Mammary epithelial cell (primary cell): ENCODE measurements at regions of chr2 and their contacts with region 1.

Region 1: DNA sequence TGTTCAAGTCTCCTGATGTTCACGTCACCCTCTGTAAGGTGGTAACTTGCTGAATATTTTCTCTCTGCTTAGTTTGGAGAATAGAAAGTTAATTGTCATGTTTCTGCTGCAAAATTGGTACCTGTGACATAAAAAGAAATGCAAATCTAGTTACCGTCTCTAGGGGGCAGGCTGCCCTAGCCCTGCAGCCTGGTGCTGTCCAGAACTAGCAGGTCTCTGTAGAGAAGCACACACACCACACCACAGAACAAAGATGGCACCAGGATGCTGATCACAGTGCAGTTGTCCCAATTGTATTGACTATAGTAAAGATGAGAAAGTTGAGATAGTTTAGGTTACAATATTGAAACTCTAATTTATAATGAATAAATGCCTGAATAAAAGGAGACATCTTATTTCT is 47.0 kb downstream of the SLC9A4 start:
- DNase-seq: peak; percentile 27
- H3K4me3 ChIP-seq: no peak overlapping the region
- H3K27ac ChIP-seq: no peak overlapping the region
- H3K4me1 ChIP-seq: no peaks in the 10 kb centered on the region
- H3K27me3 ChIP-seq: no peaks in the 10 kb centered on the region
- CTCF ChIP-seq: peak; percentile 79 to 91

Region 2: DNA sequence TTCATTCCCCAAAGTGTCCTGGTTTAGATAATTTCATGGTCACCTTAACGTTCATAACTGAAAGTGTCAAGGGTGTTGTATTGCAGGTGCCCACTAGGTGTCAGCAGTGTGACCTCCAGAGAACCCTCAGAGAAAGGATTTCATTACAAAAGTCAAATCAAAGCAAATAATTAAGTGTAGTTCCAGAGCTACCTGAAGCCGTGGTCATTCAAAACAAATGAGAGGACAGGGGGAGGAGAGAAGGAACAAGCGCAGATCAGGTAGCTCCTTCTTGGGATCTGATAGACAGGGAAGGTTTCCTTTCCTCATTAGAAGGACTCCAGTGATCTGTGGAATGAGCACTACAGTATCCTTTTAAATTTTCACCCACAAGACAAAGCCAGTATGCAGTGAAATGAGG is 47.0 kb before region 1 on chr2 and contains the start of gene SLC9A4:
- CTCF ChIA-PET with region 1: no interaction called
- dilution Hi-C with region 1: no loop called
- in situ Hi-C with region 1: no loop called
- intact Hi-C with region 1: loop called (anchors 2 kb)
- DNase-seq: peak; percentile 39
- H3K4me3 ChIP-seq: no peak within 1 kb of the TSS
- H3K27ac ChIP-seq: no peak within 1 kb of the TSS
- H3K4me1 ChIP-seq: no peaks in the 10 kb centered on the region
- H3K27me3 ChIP-seq: peaks cover 2% of the 10 kb centered on the region
- CTCF ChIP-seq: peak; percentile 90 to 91
- total RNA-seq, gene SLC9A4: 0.07 TPM in 1 of 2 donors, not detected in the other

Region 3: GRCh38 chr2:102551329-102552096 is 31.5 kb after region 1 on chr2:
- CTCF ChIA-PET with region 1: no interaction called
- dilution Hi-C with region 1: no loop called
- in situ Hi-C with region 1: no loop called
- intact Hi-C with region 1: no loop called
- DNase-seq: no peak
- H3K4me3 ChIP-seq: no peak overlapping the region
- H3K27ac ChIP-seq: no peak overlapping the region
- H3K4me1 ChIP-seq: no peaks in the 10 kb centered on the region
- H3K27me3 ChIP-seq: peaks cover 2% of the 10 kb centered on the region
- CTCF ChIP-seq: no peak

Region 4: DNA sequence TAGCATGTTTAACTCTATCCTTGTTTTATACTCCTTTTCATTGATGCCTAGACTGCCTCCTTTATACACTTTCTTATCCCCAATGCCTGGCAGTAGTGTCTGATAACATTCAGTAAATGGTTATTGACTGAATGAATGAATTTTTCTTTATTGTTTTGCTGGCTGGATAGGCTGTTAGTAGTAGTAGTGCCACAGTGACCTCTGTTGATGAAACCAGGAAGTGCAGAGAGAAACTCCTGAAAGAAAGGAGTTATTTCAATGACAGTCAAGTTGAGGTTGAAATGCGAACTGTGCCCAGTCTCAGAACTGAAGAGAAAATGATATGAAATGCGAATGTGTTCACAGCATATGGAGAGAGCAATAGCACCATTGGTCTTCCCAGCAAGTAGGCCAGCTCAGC is 72.6 kb after region 1 on chr2:
- CTCF ChIA-PET with region 1: no interaction called
- dilution Hi-C with region 1: no loop called
- in situ Hi-C with region 1: no loop called
- intact Hi-C with region 1: loop called (anchors 2 kb)
- DNase-seq: no peak
- H3K4me3 ChIP-seq: no peak overlapping the region
- H3K27ac ChIP-seq: no peak overlapping the region
- H3K4me1 ChIP-seq: no peaks in the 10 kb centered on the region
- H3K27me3 ChIP-seq: no peaks in the 10 kb centered on the region
- CTCF ChIP-seq: peak; percentile 65 to 72

Region 5: GRCh38 chr2:102606363-102606762 is 86.3 kb after region 1 on chr2:
- CTCF ChIA-PET with region 1: no interaction called
- dilution Hi-C with region 1: no loop called
- in situ Hi-C with region 1: loop called in 1 of 2 experiments (anchors 10 kb)
- intact Hi-C with region 1: no loop called
- DNase-seq: peak; percentile 96
- H3K4me3 ChIP-seq: no peak overlapping the region
- H3K27ac ChIP-seq: no peak overlapping the region
- H3K4me1 ChIP-seq: peaks cover 5% of the 10 kb centered on the region
- H3K27me3 ChIP-seq: peaks cover 1% of the 10 kb centered on the region
- CTCF ChIP-seq: no peak

Region 6: GRCh38 chr2:102615622-102616436 is 95.8 kb after region 1 on chr2:
- CTCF ChIA-PET with region 1: interaction called, 3 read pairs
- dilution Hi-C with region 1: no loop called
- in situ Hi-C with region 1: no loop called
- intact Hi-C with region 1: loop called (anchors 1 kb)
- DNase-seq: peak; percentile 53
- H3K4me3 ChIP-seq: no peak overlapping the region
- H3K27ac ChIP-seq: no peak overlapping the region
- H3K4me1 ChIP-seq: peaks cover 15% of the 10 kb centered on the region
- H3K27me3 ChIP-seq: no peaks in the 10 kb centered on the region
- CTCF ChIP-seq: peak; percentile 98 to 100

Region 7: GRCh38 chr2:102703748-102704147 is 183.7 kb after region 1 on chr2:
- CTCF ChIA-PET with region 1: no interaction called
- dilution Hi-C with region 1: no loop called
- in situ Hi-C with region 1: no loop called
- intact Hi-C with region 1: loop called (anchors 1 kb)
- DNase-seq: peak; percentile 50
- H3K4me3 ChIP-seq: no peak overlapping the region
- H3K27ac ChIP-seq: no peak overlapping the region
- H3K4me1 ChIP-seq: peaks cover under 1% of the 10 kb centered on the region
- H3K27me3 ChIP-seq: no peaks in the 10 kb centered on the region
- CTCF ChIP-seq: peak; percentile 55 to 70

Region 8: GRCh38 chr2:102806250-102806837 is 286.3 kb after region 1 on chr2:
- CTCF ChIA-PET with region 1: no interaction called
- dilution Hi-C with region 1: no loop called
- in situ Hi-C with region 1: no loop called
- intact Hi-C with region 1: loop called (anchors 10 kb)
- DNase-seq: peak; percentile 58
- H3K4me3 ChIP-seq: no peak overlapping the region
- H3K27ac ChIP-seq: no peak overlapping the region
- H3K4me1 ChIP-seq: peaks cover 8% of the 10 kb centered on the region
- H3K27me3 ChIP-seq: no peaks in the 10 kb centered on the region
- CTCF ChIP-seq: peak; percentile 78 to 87